GM12878 (cell line): ENCODE measurements at regions of chr10 and their contacts with region 1.

Region 1: DNA sequence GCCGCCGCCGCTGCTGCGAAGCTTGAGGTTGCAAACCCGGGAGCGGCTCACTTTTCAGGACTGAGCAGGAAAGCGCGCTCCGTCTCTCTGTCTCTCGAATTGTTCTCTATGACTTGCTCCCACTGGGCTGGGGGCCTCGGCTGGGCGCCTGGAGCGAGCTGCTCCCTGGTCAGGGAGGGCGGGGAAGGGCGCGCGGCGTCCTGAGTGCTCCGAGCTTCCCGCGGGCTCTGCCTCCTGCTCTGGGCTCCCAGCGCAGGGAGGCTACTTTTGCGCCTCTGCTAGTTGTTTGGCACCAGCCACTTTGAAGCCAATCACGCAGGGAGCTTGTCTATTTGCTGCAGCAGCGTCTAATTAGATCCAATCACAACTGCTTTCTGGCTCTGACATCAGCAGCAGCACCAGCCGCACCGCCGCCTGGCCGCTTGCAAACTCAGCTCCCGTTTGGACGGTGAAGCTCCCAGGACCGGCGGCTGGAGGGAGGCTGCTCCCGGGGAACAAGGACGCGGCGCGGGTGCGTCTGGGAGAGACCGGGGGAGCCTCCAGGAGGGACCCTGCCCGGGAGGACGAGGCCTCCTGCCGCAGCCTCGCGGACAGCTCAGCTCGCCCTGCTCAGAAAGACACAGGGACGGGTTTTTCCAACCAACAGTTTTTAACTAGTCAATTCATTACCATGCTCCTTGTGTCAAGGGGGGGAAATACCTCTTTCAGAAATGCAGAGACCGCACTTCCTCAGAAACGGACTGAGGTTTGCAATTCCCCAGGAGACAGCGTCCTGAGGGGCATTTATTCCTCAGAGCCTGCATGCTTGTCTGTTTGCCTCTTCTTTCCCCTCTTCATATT is at the start of gene ADARB2:
- DNase-seq: peak; percentile 53
- ATAC-seq: peak; percentile 84
- H3K4me3 ChIP-seq: peak within 1 kb of the TSS; percentile 69
- H3K27ac ChIP-seq: peak within 1 kb of the TSS; percentile 76
- H3K4me1 ChIP-seq: peaks cover 21% of the 10 kb centered on the region
- H3K27me3 ChIP-seq: no peaks in the 10 kb centered on the region
- CTCF ChIP-seq: no peak
- EP300 ChIP-seq: peak in 1 of 2 experiments; percentile 57; a peak in 1 of 4 replicates
- POLR2A ChIP-seq: peak; percentile 80
- RAD21 ChIP-seq: no peak
- polyA plus RNA-seq, gene ADARB2: 0.02 to 0.04 TPM

Region 2: DNA sequence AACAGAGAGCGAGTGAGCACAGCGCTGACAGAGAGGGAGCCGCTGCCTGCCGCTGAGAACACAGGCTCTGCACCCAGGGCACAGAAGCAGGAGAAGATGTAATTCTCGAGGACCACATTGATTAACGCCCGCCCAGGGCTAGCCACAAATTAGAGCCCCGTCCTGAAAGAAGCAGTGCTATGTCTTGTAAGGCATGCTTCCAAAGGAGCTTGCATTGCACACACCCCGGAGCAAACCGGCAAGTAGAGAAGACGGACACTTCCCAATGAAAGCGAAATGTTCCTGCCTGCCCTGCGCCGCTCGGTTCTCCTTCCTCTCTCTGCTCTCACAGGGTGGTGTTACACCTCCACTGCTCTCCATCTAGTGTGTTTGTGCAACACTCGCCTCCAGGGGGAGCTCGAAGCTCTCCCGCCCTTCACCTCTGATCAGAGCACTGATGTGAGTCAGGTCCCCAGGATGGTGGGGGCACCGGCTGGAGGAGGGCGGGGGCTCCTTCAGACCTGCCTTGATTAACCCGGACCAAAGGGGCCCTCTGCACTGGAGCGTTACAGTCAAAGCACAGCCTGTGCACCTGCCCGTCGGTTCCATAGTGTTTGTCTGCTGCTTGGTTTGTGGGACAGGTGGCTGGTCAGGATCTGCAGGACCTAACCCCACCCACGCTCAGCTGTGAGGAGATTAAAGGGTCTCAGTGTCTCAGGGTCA is 316.6 kb before region 1 on chr10:
- CTCF ChIA-PET with region 1: interaction called, 14 read pairs
- POLR2A ChIA-PET with region 1: no interaction called
- RAD21 ChIA-PET with region 1: interaction called, 14 read pairs
- SMC1A ChIA-PET with region 1: interaction called, 18 read pairs
- in situ Hi-C with region 1: no loop called
- intact Hi-C with region 1: loop called (anchors 2 kb)
- DNase-seq: no peak
- ATAC-seq: peak; percentile 96
- H3K4me3 ChIP-seq: peak overlapping the region; percentile 24; the same call in 1 of the 2 replicates
- H3K27ac ChIP-seq: no peak overlapping the region
- H3K4me1 ChIP-seq: peaks cover 6% of the 10 kb centered on the region
- H3K27me3 ChIP-seq: no peaks in the 10 kb centered on the region
- CTCF ChIP-seq: peak; percentile 86 to 93 (median 89)
- EP300 ChIP-seq: no peak
- POLR2A ChIP-seq: no peak
- RAD21 ChIP-seq: peak; percentile 89

Region 3: DNA sequence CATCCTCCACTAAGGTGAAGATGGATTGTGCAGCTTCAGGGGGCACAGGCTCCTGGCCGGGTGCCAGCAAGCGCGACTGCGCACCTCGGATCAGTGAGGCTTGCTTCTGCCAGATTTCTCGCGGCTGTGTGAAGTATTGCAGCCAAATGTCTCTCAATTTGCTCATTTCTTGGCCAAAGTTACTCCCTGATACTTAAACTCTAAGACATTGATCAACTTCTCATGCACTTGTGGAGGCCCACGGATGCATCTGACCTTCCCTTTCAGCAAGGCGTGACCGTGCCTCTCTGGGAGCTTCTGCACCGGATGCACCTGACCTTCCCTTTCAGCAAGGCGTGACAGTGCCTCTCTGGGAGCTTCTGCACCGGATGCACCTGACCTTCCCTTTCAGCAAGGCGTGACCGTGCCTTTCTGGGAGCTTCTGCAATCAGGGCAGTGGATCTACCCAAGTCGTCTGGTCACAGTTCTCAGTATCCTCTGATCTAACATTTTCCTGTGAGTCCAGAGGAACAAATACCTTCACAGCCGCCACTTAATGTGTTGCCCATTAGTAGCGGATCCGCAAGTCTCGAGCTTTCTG is 248.4 kb before region 1 on chr10:
- CTCF ChIA-PET with region 1: no interaction called
- POLR2A ChIA-PET with region 1: interaction called, 3 read pairs
- RAD21 ChIA-PET with region 1: no interaction called
- SMC1A ChIA-PET with region 1: interaction called, 3 read pairs
- in situ Hi-C with region 1: no loop called
- intact Hi-C with region 1: loop called (anchors 10 kb)
- DNase-seq: peak; percentile 65
- ATAC-seq: peak; percentile 96
- H3K4me3 ChIP-seq: peak overlapping the region; percentile 23; the same call in 1 of the 2 replicates
- H3K27ac ChIP-seq: peak overlapping the region; percentile 32; the same call in 1 of the 2 replicates
- H3K4me1 ChIP-seq: peaks cover 8% of the 10 kb centered on the region
- H3K27me3 ChIP-seq: no peaks in the 10 kb centered on the region
- CTCF ChIP-seq: no peak; a peak in 1 of 6 replicates
- EP300 ChIP-seq: 0 out of 4 replicates have a peak, but pooled peaks of 1 of the 2 experiments have one; percentile 2
- POLR2A ChIP-seq: peak; percentile 57
- RAD21 ChIP-seq: no peak

Region 4: DNA sequence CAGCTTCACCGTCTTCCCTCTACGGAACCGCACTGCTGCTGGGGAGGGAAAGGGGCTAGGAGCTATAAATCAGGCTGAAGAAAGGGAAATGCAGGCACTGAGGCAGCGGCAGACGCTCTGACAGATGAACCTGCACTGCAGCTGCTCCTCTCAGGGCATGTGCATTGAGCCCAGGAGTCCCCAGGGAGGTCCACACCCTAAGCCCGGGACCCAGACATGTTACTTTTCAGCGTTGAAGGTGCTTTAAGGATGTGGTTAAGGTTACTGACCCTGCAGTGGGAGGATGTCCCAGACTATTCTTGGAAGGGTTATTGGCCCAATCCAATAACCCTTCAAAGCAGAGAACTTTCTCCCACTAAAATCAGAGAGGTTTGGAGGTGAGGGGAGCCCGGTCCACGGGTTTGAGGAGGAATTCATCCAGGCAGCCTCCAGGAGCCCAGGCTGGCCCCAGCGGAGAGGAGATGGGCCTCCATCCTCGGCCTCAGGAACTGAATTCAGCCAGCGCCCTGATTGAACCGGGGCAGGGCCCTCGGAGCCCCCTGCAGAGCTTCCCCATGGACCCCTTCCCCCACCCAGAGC is 75.5 kb before region 1 on chr10:
- CTCF ChIA-PET with region 1: interaction called, 4 read pairs
- POLR2A ChIA-PET with region 1: interaction called, 4 read pairs
- RAD21 ChIA-PET with region 1: interaction called, 13 read pairs
- SMC1A ChIA-PET with region 1: interaction called, 3 read pairs
- in situ Hi-C with region 1: no loop called
- intact Hi-C with region 1: loop called (anchors 5 kb)
- DNase-seq: peak; percentile 34
- ATAC-seq: peak; percentile 83
- H3K4me3 ChIP-seq: no peak overlapping the region
- H3K27ac ChIP-seq: peak overlapping the region; percentile 33
- H3K4me1 ChIP-seq: peaks cover 15% of the 10 kb centered on the region
- H3K27me3 ChIP-seq: no peaks in the 10 kb centered on the region
- CTCF ChIP-seq: no peak
- EP300 ChIP-seq: no peak
- POLR2A ChIP-seq: no peak
- RAD21 ChIP-seq: no peak

Region 5: GRCh38 chr10:1724921-1725488 is 12.4 kb before region 1 on chr10:
- CTCF ChIA-PET with region 1: interaction called, 113 read pairs
- POLR2A ChIA-PET with region 1: interaction called, 39 read pairs
- RAD21 ChIA-PET with region 1: interaction called, 46 read pairs
- SMC1A ChIA-PET with region 1: interaction called, 214 read pairs
- in situ Hi-C with region 1: no loop called
- intact Hi-C with region 1: no loop called
- DNase-seq: no peak
- ATAC-seq: peak; percentile 63
- H3K4me3 ChIP-seq: no peak overlapping the region
- H3K27ac ChIP-seq: peak overlapping the region; percentile 19; the same call in 1 of the 2 replicates
- H3K4me1 ChIP-seq: no peaks in the 10 kb centered on the region; the same call in 1 of the 2 replicates
- H3K27me3 ChIP-seq: no peaks in the 10 kb centered on the region
- CTCF ChIP-seq: no peak
- EP300 ChIP-seq: no peak
- POLR2A ChIP-seq: no peak
- RAD21 ChIP-seq: no peak

Region 6: DNA sequence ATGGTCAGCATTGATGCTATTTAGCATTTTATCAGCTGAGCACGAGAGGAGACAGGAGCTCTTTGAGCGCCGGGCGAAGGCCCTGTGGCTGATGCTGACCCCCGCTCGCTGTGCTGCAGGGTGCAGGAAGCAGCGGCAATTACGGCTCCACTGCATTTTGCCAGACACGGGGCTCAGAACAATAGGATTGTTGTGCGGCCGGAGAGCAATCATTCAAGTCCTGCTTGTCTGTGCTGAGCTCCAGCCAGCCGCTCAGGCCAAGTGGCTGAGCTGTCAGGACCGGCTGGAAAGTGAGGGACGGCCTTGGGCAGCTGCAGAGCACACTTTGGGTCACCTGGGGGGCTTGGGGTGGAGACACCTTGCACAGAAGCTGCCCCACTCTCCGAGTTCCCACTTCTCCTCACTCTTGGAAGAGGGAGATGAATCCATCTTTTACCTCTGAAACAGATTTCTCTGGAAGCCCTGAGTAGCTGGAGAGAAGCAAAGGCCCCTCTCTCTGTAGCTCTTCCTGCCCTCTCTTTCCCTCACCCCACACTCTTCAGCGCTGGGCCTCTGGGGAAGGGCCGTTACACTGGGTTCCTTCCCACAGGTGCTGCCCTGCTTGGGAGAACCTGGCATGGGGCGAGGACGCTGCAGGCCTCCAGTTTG is 17.2 kb after region 1 on chr10:
- CTCF ChIA-PET with region 1: interaction called, 54 read pairs
- POLR2A ChIA-PET with region 1: interaction called, 5 read pairs
- RAD21 ChIA-PET with region 1: interaction called, 45 read pairs
- SMC1A ChIA-PET with region 1: interaction called, 21 read pairs
- in situ Hi-C with region 1: no loop called
- intact Hi-C with region 1: no loop called
- DNase-seq: no peak
- ATAC-seq: no peak
- H3K4me3 ChIP-seq: no peak overlapping the region
- H3K27ac ChIP-seq: no peak overlapping the region
- H3K4me1 ChIP-seq: no peaks in the 10 kb centered on the region
- H3K27me3 ChIP-seq: peaks cover 0 to 4% of the 10 kb centered on the region in 2 experiments; a peak in 2 of 4 replicates
- CTCF ChIP-seq: no peak
- EP300 ChIP-seq: no peak
- POLR2A ChIP-seq: no peak
- RAD21 ChIP-seq: no peak

Region 7: GRCh38 chr10:1829712-1830111 is 92.3 kb after region 1 on chr10:
- CTCF ChIA-PET with region 1: no interaction called
- POLR2A ChIA-PET with region 1: no interaction called
- RAD21 ChIA-PET with region 1: no interaction called
- SMC1A ChIA-PET with region 1: no interaction called
- in situ Hi-C with region 1: no loop called
- intact Hi-C with region 1: no loop called
- DNase-seq: no peak
- ATAC-seq: no peak
- H3K4me3 ChIP-seq: no peak overlapping the region
- H3K27ac ChIP-seq: no peak overlapping the region
- H3K4me1 ChIP-seq: no peaks in the 10 kb centered on the region
- H3K27me3 ChIP-seq: no peaks in the 10 kb centered on the region
- CTCF ChIP-seq: no peak
- EP300 ChIP-seq: no peak
- POLR2A ChIP-seq: no peak
- RAD21 ChIP-seq: no peak